ENCODE measurements at regions of chr10 and their contacts with region 1.

Region 1: GRCh38 chr10:76190634-76191270 is 759.3 kb downstream of the LRMDA start:
- DNase-seq: no peak
- H3K4me3 ChIP-seq: no peak overlapping the region
- CTCF ChIP-seq: no peak

Region 2: DNA sequence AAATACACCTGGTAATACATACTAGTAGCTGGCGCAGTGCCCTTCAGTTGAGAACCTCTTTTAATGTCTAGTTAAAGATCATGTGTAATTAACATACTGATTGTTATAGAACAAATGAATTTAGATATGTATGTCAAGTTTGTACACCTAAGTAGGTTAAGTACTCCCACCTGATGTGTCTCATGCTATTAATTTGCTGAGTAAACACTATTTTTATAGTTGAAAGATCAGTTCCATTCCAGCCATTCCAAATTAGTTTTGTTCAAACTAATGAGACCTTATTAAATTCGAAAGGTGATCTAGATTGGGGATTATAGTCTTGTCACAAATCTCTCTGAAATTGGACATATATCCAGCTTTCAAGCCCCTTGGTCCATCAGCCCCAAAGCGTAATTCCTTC is 49.4 kb before region 1 on chr10:
- in situ Hi-C with region 1: loop called (anchors 5 kb)
- DNase-seq: no peak
- H3K4me3 ChIP-seq: no peak overlapping the region
- CTCF ChIP-seq: no peak

Region 3: DNA sequence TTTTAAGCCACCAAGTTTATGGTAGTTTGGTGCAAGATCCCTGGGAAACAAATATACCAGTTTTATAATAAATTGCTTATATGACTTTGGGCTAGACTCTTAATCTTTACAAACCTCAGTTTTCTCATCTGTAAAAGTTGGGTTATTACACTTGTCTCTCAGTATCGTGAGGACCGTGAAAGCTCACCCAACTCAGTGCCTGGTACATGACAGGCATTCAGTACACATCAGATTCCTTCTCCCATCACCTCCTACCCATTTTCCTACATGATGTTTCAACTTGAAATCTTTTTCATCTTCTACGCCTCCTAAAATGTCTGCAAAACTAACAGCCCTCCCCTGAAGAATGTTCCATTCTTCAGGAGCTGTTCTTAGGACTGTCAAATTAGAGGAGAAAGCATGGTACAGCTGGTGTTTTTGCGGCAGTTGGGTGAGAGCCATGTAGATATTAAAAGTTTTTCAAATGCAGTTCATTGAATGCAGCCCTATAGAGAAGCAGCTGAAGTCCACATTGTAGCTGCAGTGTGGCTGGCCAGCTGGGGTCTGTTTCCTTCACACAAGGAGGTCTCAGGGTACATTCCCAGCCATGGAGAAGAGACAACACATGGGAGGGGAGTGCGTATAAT is 53.4 kb after region 1 on chr10:
- in situ Hi-C with region 1: no loop called
- DNase-seq: no peak
- H3K4me3 ChIP-seq: no peak overlapping the region
- CTCF ChIP-seq: no peak